MCF 10A (cell line): ENCODE measurements at regions of chr10 and their contacts with region 1.

Region 1: DNA sequence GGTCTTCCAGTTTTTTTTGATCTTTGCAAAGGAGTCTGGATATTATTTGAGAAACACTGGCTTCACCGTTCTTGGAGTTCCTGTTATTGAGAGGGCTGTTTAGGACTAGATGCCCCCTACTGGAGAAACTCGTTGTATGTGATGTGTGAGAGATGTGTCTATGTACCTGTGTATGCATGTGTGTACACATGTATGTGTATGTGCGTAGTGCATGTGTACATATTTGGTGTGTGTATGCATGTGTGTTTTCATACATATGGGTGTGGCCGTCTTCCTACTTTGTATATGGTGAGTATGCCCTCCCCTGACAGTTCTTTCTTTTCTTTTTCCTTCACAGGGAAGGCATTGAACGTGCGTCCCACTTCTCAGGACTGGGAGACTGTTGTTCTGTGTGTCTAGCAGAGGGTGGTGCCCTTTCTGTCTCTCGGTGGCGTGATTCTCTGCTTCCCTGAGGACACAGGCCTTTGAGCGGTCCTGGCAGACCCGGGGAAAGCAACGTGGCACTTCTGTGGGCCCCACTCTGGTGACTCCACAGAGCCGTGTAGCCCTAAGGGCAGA is 3.0 kb upstream of the CALHM3 start:
- DNase-seq: peak; percentile 78
- H3K4me3 Mint-ChIP-seq: no peak overlapping the region
- H3K27ac Mint-ChIP-seq: no peak overlapping the region
- H3K4me1 Mint-ChIP-seq: peaks cover 9% of the 10 kb centered on the region
- H3K27me3 Mint-ChIP-seq: no peaks in the 10 kb centered on the region
- CTCF ChIP-seq: peak; percentile 46

Region 2: DNA sequence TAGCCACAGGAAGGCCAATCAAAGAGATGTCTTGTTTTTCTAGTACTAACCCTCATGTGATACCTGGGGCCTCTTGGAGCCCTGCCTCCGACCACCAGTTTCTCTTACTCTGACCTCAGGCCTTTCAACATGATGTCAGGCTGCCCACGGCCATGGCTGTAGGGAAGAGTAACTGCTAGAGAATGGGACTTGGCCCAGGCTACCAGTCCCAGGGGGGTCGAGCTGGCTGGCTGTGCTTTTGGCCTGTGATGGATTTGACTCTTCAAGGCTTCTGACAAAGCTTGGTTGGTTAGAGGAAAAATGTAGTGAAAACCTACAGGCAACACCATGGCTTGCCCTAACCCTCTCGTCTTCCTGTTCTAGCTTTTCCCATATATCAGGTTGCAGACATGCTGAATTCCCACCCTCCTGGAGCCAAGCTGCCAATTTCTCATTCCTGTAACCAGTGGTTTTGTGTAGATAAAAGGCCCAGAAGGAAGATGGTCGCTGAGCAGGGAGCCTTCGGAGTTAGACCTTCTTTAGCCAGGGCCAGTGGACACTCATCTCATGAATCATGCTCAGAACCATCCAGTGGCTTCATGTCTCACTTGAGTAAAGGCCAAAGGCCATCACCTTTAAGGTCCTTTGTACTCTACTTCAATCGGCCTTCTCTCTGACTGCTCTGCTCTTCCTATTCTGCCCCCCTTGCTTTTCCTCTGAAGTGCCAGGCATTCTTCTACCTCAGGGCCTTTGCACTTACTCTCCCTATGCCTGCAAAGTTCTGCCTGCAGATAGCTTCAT is 958.6 kb before region 1 on chr10:
- CTCF ChIA-PET with region 1: no interaction called
- POLR2A ChIA-PET with region 1: no interaction called
- intact Hi-C with region 1: no loop called
- DNase-seq: no peak
- H3K4me3 Mint-ChIP-seq: no peak overlapping the region
- H3K27ac Mint-ChIP-seq: no peak overlapping the region
- H3K4me1 Mint-ChIP-seq: peaks cover 6% of the 10 kb centered on the region
- H3K27me3 Mint-ChIP-seq: no peaks in the 10 kb centered on the region
- CTCF ChIP-seq: no peak

Region 3: GRCh38 chr10:103069453-103070331 is 412.4 kb before region 1 on chr10:
- CTCF ChIA-PET with region 1: interaction called, 5 read pairs
- POLR2A ChIA-PET with region 1: no interaction called
- intact Hi-C with region 1: loop called (anchors 10 kb)
- DNase-seq: peak; percentile 59
- H3K4me3 Mint-ChIP-seq: no peak overlapping the region
- H3K27ac Mint-ChIP-seq: no peak overlapping the region
- H3K4me1 Mint-ChIP-seq: no peaks in the 10 kb centered on the region
- H3K27me3 Mint-ChIP-seq: no peaks in the 10 kb centered on the region
- CTCF ChIP-seq: peak; percentile 72

Region 4: DNA sequence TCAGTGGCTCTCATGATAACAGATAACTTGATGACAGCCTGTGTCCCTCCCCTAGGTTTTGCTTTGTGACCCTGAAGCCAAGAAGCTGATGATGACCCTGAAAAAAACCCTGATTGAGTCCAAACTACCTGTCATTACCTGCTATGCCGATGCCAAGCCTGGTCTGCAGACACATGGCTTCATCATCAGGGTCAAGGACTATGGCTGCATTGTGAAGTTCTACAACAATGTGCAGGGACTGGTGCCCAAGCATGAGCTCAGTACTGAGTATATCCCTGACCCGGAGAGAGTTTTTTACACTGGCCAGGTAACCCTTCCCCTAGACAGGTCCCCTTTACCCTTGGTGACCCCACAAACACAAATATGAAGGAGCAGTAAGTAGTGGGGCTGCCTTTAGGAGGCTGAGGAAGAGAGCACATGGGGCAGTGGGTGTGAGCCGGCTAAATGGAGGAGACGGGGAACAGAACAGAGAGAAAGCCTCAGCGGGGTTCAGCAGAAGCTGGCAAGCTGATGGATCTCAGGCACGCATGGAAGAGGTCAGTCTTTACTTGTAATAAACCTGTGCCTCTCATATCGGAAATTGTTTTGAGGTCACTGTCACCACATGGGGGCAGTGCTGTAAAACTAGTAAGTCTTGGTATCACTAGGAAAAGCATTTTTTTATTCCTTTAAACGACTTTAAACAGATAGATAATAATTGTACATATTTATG is 65.5 kb before region 1 on chr10:
- CTCF ChIA-PET with region 1: interaction called, 48 read pairs
- POLR2A ChIA-PET with region 1: no interaction called
- intact Hi-C with region 1: loop called (anchors 1 kb)
- DNase-seq: peak; percentile 68
- H3K4me3 Mint-ChIP-seq: no peak overlapping the region
- H3K27ac Mint-ChIP-seq: no peak overlapping the region
- H3K4me1 Mint-ChIP-seq: no peaks in the 10 kb centered on the region
- H3K27me3 Mint-ChIP-seq: no peaks in the 10 kb centered on the region
- CTCF ChIP-seq: peak; percentile 37

Region 5: DNA sequence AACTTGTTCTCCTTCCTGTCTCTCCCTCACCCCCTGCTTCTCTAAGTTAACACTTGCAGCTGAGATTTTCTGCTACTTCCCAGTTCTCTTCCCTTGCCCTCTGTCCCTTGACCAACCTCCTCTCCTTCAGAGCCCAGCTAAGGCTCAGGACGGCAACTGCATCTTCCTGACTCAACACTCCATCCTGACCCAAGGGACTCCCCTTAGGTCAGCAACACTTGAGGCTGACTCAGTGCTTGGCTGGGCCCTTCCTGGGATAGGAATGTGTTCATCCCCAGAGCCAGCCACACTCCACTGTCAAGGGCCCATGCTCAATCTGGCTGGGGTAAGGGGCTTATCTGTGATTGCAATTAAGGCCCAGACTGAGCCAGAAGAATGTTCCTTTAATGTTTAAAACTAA is 33.3 kb before region 1 on chr10:
- CTCF ChIA-PET with region 1: interaction called, 5 read pairs
- POLR2A ChIA-PET with region 1: interaction called, 7 read pairs
- intact Hi-C with region 1: loop called (anchors 5 kb)
- DNase-seq: peak; percentile 75
- H3K4me3 Mint-ChIP-seq: no peak overlapping the region
- H3K27ac Mint-ChIP-seq: peak overlapping the region; percentile 5
- H3K4me1 Mint-ChIP-seq: peaks cover 25% of the 10 kb centered on the region
- H3K27me3 Mint-ChIP-seq: no peaks in the 10 kb centered on the region
- CTCF ChIP-seq: no peak

Region 6: DNA sequence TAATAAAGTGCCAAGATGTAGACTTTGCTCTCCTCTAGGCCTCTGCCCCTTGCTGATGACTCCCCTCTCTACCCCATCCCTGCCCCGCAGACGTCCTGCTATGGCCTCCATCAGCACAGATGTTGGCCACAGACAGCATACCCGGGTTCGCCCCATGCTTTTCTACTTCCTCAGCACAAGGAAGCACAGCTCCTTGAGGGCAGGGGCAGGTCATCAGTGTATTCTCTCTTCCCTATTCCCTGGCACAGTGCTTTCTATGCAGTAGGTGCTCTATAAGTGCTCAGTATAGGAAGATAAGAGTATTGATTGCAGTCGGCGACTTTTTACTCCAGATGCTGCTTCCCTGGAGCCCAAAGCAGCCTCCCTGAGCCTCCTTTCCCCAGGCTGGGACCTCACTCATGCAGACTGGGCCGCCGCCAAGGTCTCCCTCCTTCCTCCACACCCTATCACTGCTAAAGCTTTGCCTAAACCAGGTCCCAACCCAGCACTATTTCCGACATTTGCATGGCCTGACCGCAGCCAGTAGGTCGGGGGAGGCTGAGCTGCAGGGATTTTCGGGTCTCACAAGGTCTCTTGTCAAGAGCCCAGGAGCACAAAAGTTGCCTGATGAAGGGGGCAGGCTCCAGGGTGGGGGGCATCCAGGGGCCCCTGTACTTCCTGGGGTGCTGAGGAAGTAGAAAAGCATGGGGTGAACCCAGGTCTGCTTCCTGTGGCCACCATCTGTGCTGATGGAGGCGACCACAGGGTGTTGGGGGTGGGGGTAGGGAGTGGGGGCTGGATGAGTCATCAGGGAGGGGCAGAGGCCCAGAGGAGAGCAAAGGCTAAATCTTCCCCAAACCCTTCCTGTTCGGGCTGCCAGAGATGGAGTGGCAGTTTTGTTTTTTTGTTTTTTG is 11.0 kb before region 1 on chr10:
- CTCF ChIA-PET with region 1: interaction called, 26 read pairs
- POLR2A ChIA-PET with region 1: no interaction called
- intact Hi-C with region 1: no loop called
- DNase-seq: no peak
- H3K4me3 Mint-ChIP-seq: no peak overlapping the region
- H3K27ac Mint-ChIP-seq: no peak overlapping the region
- H3K4me1 Mint-ChIP-seq: no peaks in the 10 kb centered on the region
- H3K27me3 Mint-ChIP-seq: peaks cover 29% of the 10 kb centered on the region
- CTCF ChIP-seq: no peak